Left cardiac atrium (tissue), 4 donors: ENCODE measurements at regions of chr10 and their contacts with region 1.

Region 1: GRCh38 chr10:5873515-5873995 is 16.1 kb downstream of the ANKRD16 start:
- DNase-seq: no peak
- ATAC-seq: peak; percentile 75 to 81

Region 2: DNA sequence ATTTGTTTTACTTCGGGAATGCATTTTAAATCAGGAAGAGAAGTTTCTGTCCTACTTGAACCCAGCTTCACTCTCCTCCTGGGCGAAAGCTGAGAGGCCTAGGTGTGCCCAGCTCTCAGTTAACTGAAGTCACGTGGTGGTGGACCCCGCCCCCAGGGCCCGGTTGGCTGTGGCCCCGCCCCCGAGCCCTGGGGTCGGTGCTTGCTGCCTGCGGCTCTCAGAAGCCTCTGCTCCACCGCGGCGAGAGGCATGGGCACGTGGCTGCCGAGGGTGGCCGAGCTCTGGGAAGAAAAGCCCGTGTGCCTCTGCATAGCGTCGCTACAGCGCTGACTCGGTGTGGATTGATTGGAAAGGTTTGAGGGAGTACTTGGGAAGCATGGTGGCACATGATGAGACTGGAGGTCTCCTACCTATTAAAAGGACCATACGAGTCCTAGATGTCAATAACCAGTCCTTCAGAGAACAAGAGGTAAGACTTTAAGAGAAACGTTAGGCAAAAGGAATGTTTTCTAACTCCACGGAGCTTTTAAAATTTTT is 427.1 kb before region 1 on chr10:
- intact Hi-C with region 1: loop called in 1 of 2 experiments (anchors 10 kb)
- DNase-seq: peak; percentile 93
- ATAC-seq: peak; percentile 97 to 98

Region 3: GRCh38 chr10:5684971-5685763 is 188.4 kb before region 1 on chr10:
- intact Hi-C with region 1: loop called in 1 of 2 experiments (anchors 5 kb)
- DNase-seq: peak; percentile 77
- ATAC-seq: peak; percentile 48 to 68

Region 4: GRCh38 chr10:5915451-5915850 is 41.9 kb after region 1 on chr10:
- intact Hi-C with region 1: no loop called
- DNase-seq: no peak
- ATAC-seq: no peak

Region 5: GRCh38 chr10:6228010-6228511 is 354.5 kb after region 1 on chr10:
- intact Hi-C with region 1: no loop called
- DNase-seq: no peak
- ATAC-seq: peak; percentile 7 to 70